GM12878 (cell line): ENCODE measurements at regions of chr20 and their contacts with region 1.

Region 1: GRCh38 chr20:22339091-22339881 is 245.1 kb downstream of the FOXA2 start:
- DNase-seq: no peak
- ATAC-seq: peak; percentile 82
- H3K4me3 ChIP-seq: no peak overlapping the region
- H3K27ac ChIP-seq: no peak overlapping the region
- H3K4me1 ChIP-seq: no peaks in the 10 kb centered on the region
- H3K27me3 ChIP-seq: no peaks in the 10 kb centered on the region
- CTCF ChIP-seq: peak; percentile 72 to 80 (median 79)
- EP300 ChIP-seq: no peak
- POLR2A ChIP-seq: no peak
- RAD21 ChIP-seq: peak; percentile 93

Region 2: DNA sequence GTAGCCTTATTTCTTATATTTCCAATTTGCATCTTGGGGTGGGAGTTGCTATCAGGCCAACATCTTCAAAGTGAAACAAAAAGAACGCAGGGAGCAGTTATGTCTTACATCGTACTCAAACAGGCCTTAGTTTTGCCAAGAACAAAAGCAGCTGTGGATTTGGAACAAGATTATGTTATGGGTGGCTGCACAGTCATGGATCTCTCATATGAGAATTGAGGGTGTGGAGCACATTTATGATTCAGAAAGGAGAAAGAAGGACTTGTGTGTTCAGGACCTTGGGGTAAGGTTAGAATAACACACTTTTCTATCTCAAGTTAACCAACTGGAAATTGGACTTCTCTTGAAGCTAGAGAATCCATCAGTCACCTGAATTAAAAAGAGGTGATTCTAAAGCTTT is 14.8 kb before region 1 on chr20:
- CTCF ChIA-PET with region 1: no interaction called
- POLR2A ChIA-PET with region 1: no interaction called
- RAD21 ChIA-PET with region 1: no interaction called
- SMC1A ChIA-PET with region 1: no interaction called
- in situ Hi-C with region 1: no loop called
- intact Hi-C with region 1: no loop called
- DNase-seq: no peak
- ATAC-seq: no peak
- H3K4me3 ChIP-seq: no peak overlapping the region
- H3K27ac ChIP-seq: no peak overlapping the region
- H3K4me1 ChIP-seq: no peaks in the 10 kb centered on the region
- H3K27me3 ChIP-seq: no peaks in the 10 kb centered on the region; a peak in 1 of 4 replicates
- CTCF ChIP-seq: no peak
- EP300 ChIP-seq: no peak
- POLR2A ChIP-seq: no peak
- RAD21 ChIP-seq: no peak

Region 3: GRCh38 chr20:22352019-22352418 is 12.7 kb after region 1 on chr20:
- CTCF ChIA-PET with region 1: interaction called, 28 read pairs
- POLR2A ChIA-PET with region 1: no interaction called
- RAD21 ChIA-PET with region 1: no interaction called
- SMC1A ChIA-PET with region 1: interaction called, 6 read pairs
- in situ Hi-C with region 1: no loop called
- intact Hi-C with region 1: no loop called
- DNase-seq: no peak
- ATAC-seq: no peak
- H3K4me3 ChIP-seq: no peak overlapping the region
- H3K27ac ChIP-seq: no peak overlapping the region
- H3K4me1 ChIP-seq: no peaks in the 10 kb centered on the region
- H3K27me3 ChIP-seq: no peaks in the 10 kb centered on the region; a peak in 1 of 4 replicates
- CTCF ChIP-seq: no peak
- EP300 ChIP-seq: no peak
- POLR2A ChIP-seq: no peak
- RAD21 ChIP-seq: no peak

Region 4: DNA sequence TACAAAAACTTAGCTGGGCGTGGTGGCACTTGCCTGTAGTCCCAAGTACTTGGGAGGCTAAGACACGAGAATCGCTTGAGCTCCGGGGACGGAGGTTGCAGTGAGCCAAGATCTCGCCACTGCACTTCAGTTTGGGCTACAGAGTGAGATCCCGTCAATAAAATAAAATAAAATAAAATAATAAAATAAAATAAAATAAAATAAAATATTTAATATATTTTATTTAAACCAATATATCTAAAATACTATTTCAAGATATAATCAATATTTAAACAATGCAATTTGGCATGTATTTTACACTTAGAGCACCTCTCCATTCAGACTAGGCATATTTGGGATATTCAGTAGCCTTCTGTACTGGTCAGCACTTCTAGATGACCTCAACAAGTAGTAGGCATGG is 103.0 kb after region 1 on chr20:
- CTCF ChIA-PET with region 1: no interaction called
- POLR2A ChIA-PET with region 1: no interaction called
- RAD21 ChIA-PET with region 1: no interaction called
- SMC1A ChIA-PET with region 1: no interaction called
- in situ Hi-C with region 1: no loop called
- intact Hi-C with region 1: no loop called
- DNase-seq: no peak
- ATAC-seq: no peak
- H3K4me3 ChIP-seq: no peak overlapping the region
- H3K27ac ChIP-seq: no peak overlapping the region
- H3K4me1 ChIP-seq: no peaks in the 10 kb centered on the region
- H3K27me3 ChIP-seq: no peaks in the 10 kb centered on the region; a peak in 1 of 4 replicates
- CTCF ChIP-seq: no peak
- EP300 ChIP-seq: no peak
- POLR2A ChIP-seq: no peak
- RAD21 ChIP-seq: no peak

Region 5: DNA sequence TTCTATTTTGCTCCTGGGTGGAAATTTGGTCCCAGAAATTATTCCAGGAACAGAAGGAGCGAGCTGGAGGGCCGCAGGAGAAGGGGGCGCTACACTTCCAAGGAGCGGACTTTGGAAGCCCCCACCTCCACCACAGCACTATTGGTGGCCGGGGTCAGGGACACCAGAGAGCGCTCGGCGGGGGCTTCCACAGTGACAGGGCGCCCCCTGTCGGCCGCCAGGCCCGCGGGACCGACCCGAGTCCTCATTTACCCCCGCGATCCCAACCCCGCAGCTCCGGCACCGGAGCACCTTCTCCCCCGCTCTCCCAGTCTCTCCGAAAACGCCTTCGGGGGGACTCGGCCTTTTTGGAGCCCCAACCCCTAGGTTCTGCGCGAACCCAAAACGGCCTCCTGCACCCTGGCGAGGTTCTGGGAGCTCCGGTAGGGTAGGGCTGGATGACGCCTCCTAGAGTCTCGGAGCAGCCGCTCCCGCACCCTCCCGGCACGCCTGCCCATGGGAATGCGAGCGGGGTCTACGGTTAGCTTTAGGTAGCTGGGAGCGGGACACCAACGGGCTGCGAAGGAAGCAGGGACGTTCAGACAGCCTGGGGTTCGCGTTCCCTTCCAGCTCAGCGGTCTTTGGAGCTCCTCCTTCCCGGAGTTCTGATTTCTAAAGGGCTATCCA is 247.5 kb after region 1 on chr20:
- CTCF ChIA-PET with region 1: interaction called, 47 read pairs
- POLR2A ChIA-PET with region 1: no interaction called
- RAD21 ChIA-PET with region 1: interaction called, 32 read pairs
- SMC1A ChIA-PET with region 1: interaction called, 23 read pairs
- in situ Hi-C with region 1: loop called (anchors 5 kb)
- intact Hi-C with region 1: loop called (anchors 1 kb)
- DNase-seq: no peak
- ATAC-seq: peak; percentile 72
- H3K4me3 ChIP-seq: no peak overlapping the region
- H3K27ac ChIP-seq: no peak overlapping the region
- H3K4me1 ChIP-seq: no peaks in the 10 kb centered on the region
- H3K27me3 ChIP-seq: peaks cover 0 to 6% of the 10 kb centered on the region in 2 experiments; a peak in 3 of 4 replicates
- CTCF ChIP-seq: peak; percentile 50 to 54 (median 51)
- EP300 ChIP-seq: no peak
- POLR2A ChIP-seq: no peak
- RAD21 ChIP-seq: peak; percentile 59

Region 6: DNA sequence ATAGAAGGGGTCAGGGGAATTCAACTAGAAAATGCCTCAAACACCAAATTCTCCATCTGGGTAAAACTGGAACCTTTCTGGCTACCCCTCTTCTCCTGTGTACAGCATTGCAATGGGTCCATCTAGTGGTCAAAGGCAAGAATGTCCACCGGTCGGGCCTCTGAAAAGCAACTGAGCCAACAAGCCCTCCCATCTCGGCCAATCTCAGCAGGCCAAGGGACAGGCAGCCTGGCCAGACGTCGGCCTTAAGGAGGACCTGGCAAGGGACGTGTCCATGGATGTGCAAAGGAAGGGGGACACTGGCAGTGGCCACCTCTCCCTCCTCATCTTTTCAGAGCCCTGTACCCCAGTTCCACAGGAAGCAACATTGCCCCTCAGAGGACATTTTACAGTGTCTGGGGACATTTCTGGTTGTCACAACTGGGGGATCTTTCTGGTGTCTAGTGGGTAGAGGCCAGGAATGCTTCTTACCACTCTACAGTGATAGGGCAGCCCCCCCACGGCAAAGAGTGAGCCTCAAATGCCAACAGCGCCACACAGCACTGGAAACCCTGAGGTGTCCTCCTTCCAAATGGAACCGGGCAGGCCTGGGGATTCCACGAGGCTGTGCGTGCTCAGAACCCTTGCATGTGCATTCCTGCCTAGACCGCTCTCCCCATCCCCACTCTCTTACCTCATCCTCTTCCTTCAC is 344.9 kb after region 1 on chr20:
- CTCF ChIA-PET with region 1: interaction called, 80 read pairs
- POLR2A ChIA-PET with region 1: no interaction called
- RAD21 ChIA-PET with region 1: interaction called, 31 read pairs
- SMC1A ChIA-PET with region 1: interaction called, 37 read pairs
- in situ Hi-C with region 1: loop called (anchors 5 kb)
- intact Hi-C with region 1: loop called (anchors 1 kb)
- DNase-seq: peak; percentile 15
- ATAC-seq: peak; percentile 96
- H3K4me3 ChIP-seq: no peak overlapping the region
- H3K27ac ChIP-seq: no peak overlapping the region
- H3K4me1 ChIP-seq: no peaks in the 10 kb centered on the region
- H3K27me3 ChIP-seq: no peaks in the 10 kb centered on the region
- CTCF ChIP-seq: peak; percentile 77 to 88 (median 78)
- EP300 ChIP-seq: no peak
- POLR2A ChIP-seq: no peak
- RAD21 ChIP-seq: peak; percentile 93

Region 7: GRCh38 chr20:23340524-23340923 is 1001.2 kb after region 1 on chr20:
- CTCF ChIA-PET with region 1: interaction called, 3 read pairs
- POLR2A ChIA-PET with region 1: no interaction called
- RAD21 ChIA-PET with region 1: interaction called, 4 read pairs
- SMC1A ChIA-PET with region 1: no interaction called
- in situ Hi-C with region 1: loop called (anchors 5 kb)
- intact Hi-C with region 1: no loop called
- DNase-seq: no peak
- ATAC-seq: peak; percentile 79
- H3K4me3 ChIP-seq: no peak overlapping the region
- H3K27ac ChIP-seq: no peak overlapping the region
- H3K4me1 ChIP-seq: no peaks in the 10 kb centered on the region; the same call in none of the 2 replicates
- H3K27me3 ChIP-seq: no peaks in the 10 kb centered on the region
- CTCF ChIP-seq: peak; percentile 45 to 56 (median 54); a peak in 5 of 6 replicates
- EP300 ChIP-seq: no peak
- POLR2A ChIP-seq: no peak
- RAD21 ChIP-seq: peak; percentile 81